Activated T-helper 2 cell treated with anti-CD3 and anti-CD28 coated beads, Interferon-gamma antibody, Interleukin-2, Interleukin-4, amounts not matched to agents 10 μg/mL and 5 μg/mL and 100 μg/mL, durations not matched to agents 14 hours and 24 hours and 36 hours (primary cell): ENCODE measurements at regions of chr3 and their contacts with region 1.

Region 1: DNA sequence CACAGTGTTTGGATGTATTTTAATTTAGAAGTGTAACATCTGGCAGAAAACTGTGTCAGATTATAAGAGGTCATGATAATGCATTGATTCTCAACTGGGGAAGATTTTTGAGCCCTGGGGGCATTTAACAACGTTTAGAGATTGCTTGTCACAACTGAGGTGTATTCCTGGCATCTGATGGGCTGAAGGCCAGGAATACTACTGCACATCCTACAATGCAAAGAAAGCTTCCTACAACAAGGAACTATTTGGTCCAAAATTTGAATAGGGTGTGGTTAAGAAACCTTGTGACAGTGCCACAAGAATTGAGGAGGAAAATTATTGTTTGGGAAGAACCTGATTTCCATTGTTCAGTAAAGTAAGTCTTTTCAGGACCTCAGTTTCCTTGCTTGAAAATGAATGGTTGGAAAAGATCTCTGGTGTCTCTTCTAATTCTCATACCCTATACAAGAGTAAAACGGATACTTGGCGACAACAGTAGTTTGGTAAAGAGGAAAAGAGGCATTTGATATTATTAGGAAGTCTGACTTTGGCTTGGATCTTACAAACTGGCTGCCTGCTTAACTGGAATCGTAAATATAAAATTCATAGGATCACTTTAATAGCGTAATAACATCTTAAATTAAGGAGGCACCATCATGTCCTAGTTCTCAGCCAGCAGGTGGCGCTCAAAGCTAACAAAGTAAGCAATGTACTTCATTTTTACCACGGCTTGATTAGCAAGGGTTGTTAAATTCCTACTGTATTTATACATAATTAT is 4.3 kb downstream of the DAZL start:
- DNase-seq: peak; percentile 50
- H3K4me3 Mint-ChIP-seq: no peak overlapping the region
- H3K27ac Mint-ChIP-seq: no peak overlapping the region
- H3K4me1 Mint-ChIP-seq: peaks cover 26% of the 10 kb centered on the region
- H3K27me3 Mint-ChIP-seq: peaks cover 47% of the 10 kb centered on the region

Region 2: GRCh38 chr3:16290007-16290826 is 310.7 kb before region 1 on chr3:
- intact Hi-C with region 1: loop called (anchors 2 kb)
- DNase-seq: no peak
- H3K4me3 Mint-ChIP-seq: peak overlapping the region; percentile 82
- H3K27ac Mint-ChIP-seq: peak overlapping the region; percentile 68
- H3K4me1 Mint-ChIP-seq: peaks cover 80% of the 10 kb centered on the region
- H3K27me3 Mint-ChIP-seq: no peaks in the 10 kb centered on the region

Region 3: GRCh38 chr3:16795581-16795980 is 194.6 kb after region 1 on chr3:
- intact Hi-C with region 1: loop called (anchors 2 kb)
- DNase-seq: no peak
- H3K4me3 Mint-ChIP-seq: no peak overlapping the region
- H3K27ac Mint-ChIP-seq: no peak overlapping the region
- H3K4me1 Mint-ChIP-seq: peaks cover 33% of the 10 kb centered on the region
- H3K27me3 Mint-ChIP-seq: peaks cover 11% of the 10 kb centered on the region

Region 4: DNA sequence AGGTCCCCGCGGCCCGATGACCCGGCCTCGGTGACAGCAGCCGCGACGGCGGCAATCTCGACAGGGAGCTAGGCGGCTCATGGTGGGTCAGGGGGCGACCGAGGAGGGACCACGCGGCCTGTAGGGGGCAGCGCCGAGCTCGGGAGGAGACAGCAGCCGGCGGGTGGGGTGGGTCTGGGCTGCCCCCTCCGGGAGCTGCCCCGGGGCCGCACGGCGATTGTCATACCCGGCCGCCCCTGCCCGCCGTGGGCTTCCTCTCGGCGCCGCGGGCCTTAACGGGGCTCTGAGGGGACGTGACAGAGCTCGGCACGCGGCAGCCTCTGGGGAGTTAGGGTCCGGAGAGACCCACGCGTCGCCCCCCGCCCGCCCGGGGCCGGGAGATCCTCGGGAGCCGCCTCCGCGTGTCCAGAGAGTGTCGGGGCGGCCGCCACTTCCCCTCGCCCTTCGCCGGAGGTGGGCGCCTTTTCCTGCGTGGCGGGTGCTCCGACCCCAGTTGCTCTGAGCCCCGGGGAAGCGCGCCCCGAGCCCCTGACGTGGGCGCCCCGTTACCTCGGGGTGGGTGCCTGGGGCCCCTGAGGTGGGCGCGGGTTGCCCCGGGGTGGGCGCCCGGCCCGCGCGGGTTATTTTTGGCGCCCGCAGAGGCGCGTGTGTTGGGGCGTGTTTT is 283.3 kb after region 1 on chr3:
- intact Hi-C with region 1: loop called (anchors 5 kb)
- DNase-seq: peak; percentile 57
- H3K4me3 Mint-ChIP-seq: peak overlapping the region; percentile 93
- H3K27ac Mint-ChIP-seq: peak overlapping the region; percentile 97
- H3K4me1 Mint-ChIP-seq: peaks cover 35% of the 10 kb centered on the region
- H3K27me3 Mint-ChIP-seq: peaks cover 17% of the 10 kb centered on the region

Region 5: GRCh38 chr3:17151598-17152373 is 550.8 kb after region 1 on chr3:
- intact Hi-C with region 1: loop called (anchors 1 kb)
- DNase-seq: peak; percentile 91
- H3K4me3 Mint-ChIP-seq: peak overlapping the region; percentile 49
- H3K27ac Mint-ChIP-seq: peak overlapping the region; percentile 91
- H3K4me1 Mint-ChIP-seq: peaks cover 66% of the 10 kb centered on the region
- H3K27me3 Mint-ChIP-seq: no peaks in the 10 kb centered on the region

Region 6: DNA sequence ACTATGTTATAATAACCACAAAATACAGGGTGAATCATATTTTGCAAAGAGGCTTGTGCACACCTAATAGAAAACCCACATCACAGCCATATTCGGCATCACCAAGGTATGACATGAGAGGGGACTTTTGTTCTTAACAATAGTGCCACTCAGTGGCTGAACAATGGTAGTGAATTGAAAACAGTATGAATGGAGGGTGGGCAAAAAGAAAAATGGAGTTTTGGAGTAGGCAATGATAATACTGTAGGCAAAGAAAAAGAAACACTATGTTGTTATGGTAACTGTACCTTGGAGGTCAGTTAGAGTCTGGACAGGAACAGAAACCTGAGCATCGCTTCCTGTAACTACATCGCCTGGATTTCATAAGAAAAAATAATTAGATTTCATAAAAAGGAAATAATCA is 632.4 kb after region 1 on chr3:
- intact Hi-C with region 1: loop called (anchors 1 kb)
- DNase-seq: peak; percentile 27
- H3K4me3 Mint-ChIP-seq: no peak overlapping the region
- H3K27ac Mint-ChIP-seq: no peak overlapping the region
- H3K4me1 Mint-ChIP-seq: peaks cover 18% of the 10 kb centered on the region
- H3K27me3 Mint-ChIP-seq: no peaks in the 10 kb centered on the region